ENCODE measurements at regions of chr3 and their contacts with region 1.

Region 1: GRCh38 chr3:144482876-144483275 is 511.3 kb downstream of the DIPK2A start:
- DNase-seq: no peak
- ATAC-seq: no peak
- H3K4me3 ChIP-seq: no peak overlapping the region
- H3K27ac ChIP-seq: no peak overlapping the region
- H3K4me1 ChIP-seq: no peaks in the 10 kb centered on the region
- H3K27me3 ChIP-seq: no peaks in the 10 kb centered on the region; a peak in 1 of 5 replicates
- CTCF ChIP-seq: no peak
- EP300 ChIP-seq: no peak
- POLR2A ChIP-seq: no peak
- RAD21 ChIP-seq: no peak

Region 2: GRCh38 chr3:143535994-143536784 is 946.7 kb before region 1 on chr3:
- CTCF ChIA-PET with region 1: no interaction called
- POLR2A ChIA-PET with region 1: no interaction called
- in situ Hi-C with region 1: no loop called
- intact Hi-C with region 1: loop called (anchors 5 kb)
- DNase-seq: no peak
- ATAC-seq: no peak
- H3K4me3 ChIP-seq: no peak overlapping the region
- H3K27ac ChIP-seq: no peak overlapping the region
- H3K4me1 ChIP-seq: no peaks in the 10 kb centered on the region
- H3K27me3 ChIP-seq: no peaks in the 10 kb centered on the region
- CTCF ChIP-seq: no peak
- EP300 ChIP-seq: no peak
- POLR2A ChIP-seq: no peak
- RAD21 ChIP-seq: no peak

Region 3: GRCh38 chr3:144028798-144029411 is 454.0 kb before region 1 on chr3:
- CTCF ChIA-PET with region 1: no interaction called
- POLR2A ChIA-PET with region 1: no interaction called
- in situ Hi-C with region 1: no loop called
- intact Hi-C with region 1: no loop called
- DNase-seq: no peak
- ATAC-seq: no peak
- H3K4me3 ChIP-seq: no peak overlapping the region
- H3K27ac ChIP-seq: no peak overlapping the region
- H3K4me1 ChIP-seq: no peaks in the 10 kb centered on the region
- H3K27me3 ChIP-seq: no peaks in the 10 kb centered on the region
- CTCF ChIP-seq: no peak
- EP300 ChIP-seq: no peak
- POLR2A ChIP-seq: no peak
- RAD21 ChIP-seq: no peak

Region 4: DNA sequence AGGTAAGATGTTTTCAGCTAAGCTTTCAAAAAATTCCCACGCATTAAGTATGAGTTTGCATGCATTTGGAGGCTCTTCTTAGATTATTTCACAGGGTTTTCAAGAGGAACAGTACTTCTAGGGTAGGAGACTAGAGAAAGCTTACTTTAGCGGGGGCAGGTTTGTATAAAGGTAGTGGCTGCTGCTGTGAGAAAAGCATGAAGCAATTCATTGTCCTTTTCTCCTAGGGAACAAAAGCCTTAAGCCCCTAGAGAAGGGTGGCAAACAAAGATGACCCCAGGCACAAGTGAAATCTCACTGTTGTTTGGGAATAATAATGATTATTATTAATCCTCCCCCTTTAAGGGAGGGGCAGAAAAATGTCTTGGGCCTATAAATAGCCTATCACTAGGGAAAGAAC is 200.6 kb before region 1 on chr3:
- CTCF ChIA-PET with region 1: no interaction called
- POLR2A ChIA-PET with region 1: no interaction called
- in situ Hi-C with region 1: no loop called
- intact Hi-C with region 1: no loop called
- DNase-seq: no peak
- ATAC-seq: no peak
- H3K4me3 ChIP-seq: no peak overlapping the region
- H3K27ac ChIP-seq: no peak overlapping the region
- H3K4me1 ChIP-seq: no peaks in the 10 kb centered on the region
- H3K27me3 ChIP-seq: no peaks in the 10 kb centered on the region; a peak in 1 of 5 replicates
- CTCF ChIP-seq: no peak
- EP300 ChIP-seq: no peak
- POLR2A ChIP-seq: no peak
- RAD21 ChIP-seq: no peak

Measured in HepG2 (cell line).